ENCODE measurements at regions of chr4 and their contacts with region 1.

Region 1: GRCh38 chr4:121950212-121950679 is 1.6 kb downstream of the TRPC3 start:
- DNase-seq: peak; percentile 63
- ATAC-seq: peak; percentile 83
- H3K4me3 Mint-ChIP-seq: peak overlapping the region; percentile 81
- H3K27ac Mint-ChIP-seq: no peak overlapping the region
- H3K4me1 Mint-ChIP-seq: peaks cover 14% of the 10 kb centered on the region
- H3K27me3 Mint-ChIP-seq: peaks cover 44% of the 10 kb centered on the region
- CTCF ChIP-seq: no peak

Region 2: GRCh38 chr4:120517966-120518365 is 1432.3 kb before region 1 on chr4:
- CTCF ChIA-PET with region 1: no interaction called
- POLR2A ChIA-PET with region 1: no interaction called
- intact Hi-C with region 1: no loop called
- DNase-seq: no peak
- ATAC-seq: no peak
- H3K4me3 Mint-ChIP-seq: no peak overlapping the region
- H3K27ac Mint-ChIP-seq: no peak overlapping the region
- H3K4me1 Mint-ChIP-seq: no peaks in the 10 kb centered on the region
- H3K27me3 Mint-ChIP-seq: no peaks in the 10 kb centered on the region
- CTCF ChIP-seq: no peak

Region 3: DNA sequence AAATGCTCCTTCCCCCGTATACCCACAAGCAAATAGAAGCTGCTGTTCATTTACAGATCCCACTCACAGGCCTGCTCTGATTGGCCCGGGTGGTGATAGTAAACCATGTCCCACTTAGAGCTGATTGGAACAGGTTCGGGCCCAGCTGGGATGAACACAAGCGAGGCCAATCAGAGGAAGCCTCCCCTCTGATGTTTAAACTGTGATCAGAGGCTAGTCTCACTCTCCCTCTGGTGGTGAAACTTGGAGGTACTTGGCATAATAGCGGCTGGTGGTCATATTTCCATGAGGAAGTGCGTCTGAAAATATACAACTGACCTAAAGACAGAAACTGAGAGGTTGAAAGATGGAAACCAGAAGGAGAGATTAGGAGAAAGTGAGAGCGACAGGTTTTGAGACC is 53.1 kb after region 1 on chr4:
- CTCF ChIA-PET with region 1: interaction called, 7 read pairs
- POLR2A ChIA-PET with region 1: no interaction called
- intact Hi-C with region 1: loop called (anchors 1 kb)
- DNase-seq: no peak
- ATAC-seq: peak; percentile 75
- H3K4me3 Mint-ChIP-seq: no peak overlapping the region
- H3K27ac Mint-ChIP-seq: no peak overlapping the region
- H3K4me1 Mint-ChIP-seq: no peaks in the 10 kb centered on the region
- H3K27me3 Mint-ChIP-seq: peaks cover 12% of the 10 kb centered on the region
- CTCF ChIP-seq: no peak

Region 4: GRCh38 chr4:122151982-122152710 is 201.9 kb after region 1 on chr4 and contains the start of gene BLTP1:
- CTCF ChIA-PET with region 1: no interaction called
- POLR2A ChIA-PET with region 1: no interaction called
- intact Hi-C with region 1: loop called (anchors 5 kb)
- DNase-seq: peak; percentile 85
- ATAC-seq: peak; percentile 95
- H3K4me3 Mint-ChIP-seq: peak within 1 kb of the TSS; percentile 97
- H3K27ac Mint-ChIP-seq: peak within 1 kb of the TSS; percentile 97
- H3K4me1 Mint-ChIP-seq: peaks cover 39% of the 10 kb centered on the region
- H3K27me3 Mint-ChIP-seq: no peaks in the 10 kb centered on the region
- CTCF ChIP-seq: no peak
- total RNA-seq, gene BLTP1: 39.1 and 44.4 TPM in 2 replicates

Region 5: DNA sequence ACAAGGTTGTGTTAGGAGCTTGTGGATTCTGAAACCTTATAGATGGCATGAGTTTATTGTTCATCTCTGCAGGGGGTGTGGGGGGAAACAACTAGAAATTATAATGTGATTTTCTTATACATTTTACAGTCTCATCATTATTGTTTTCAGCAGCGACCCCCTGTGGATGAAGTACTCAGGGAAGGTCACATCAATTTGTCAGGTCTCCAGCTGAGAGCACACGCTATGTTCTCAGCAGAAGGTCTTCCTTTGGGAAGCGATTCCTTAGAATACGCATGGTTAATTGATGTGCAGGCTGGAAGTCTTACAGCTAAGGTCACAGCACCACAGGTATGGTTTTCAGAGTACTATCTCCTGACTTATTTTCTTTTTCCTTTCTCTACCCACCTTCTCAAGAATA is 274.1 kb after region 1 on chr4:
- CTCF ChIA-PET with region 1: no interaction called
- POLR2A ChIA-PET with region 1: no interaction called
- intact Hi-C with region 1: loop called (anchors 2 kb)
- DNase-seq: no peak
- ATAC-seq: no peak
- H3K4me3 Mint-ChIP-seq: no peak overlapping the region
- H3K27ac Mint-ChIP-seq: no peak overlapping the region
- H3K4me1 Mint-ChIP-seq: no peaks in the 10 kb centered on the region
- H3K27me3 Mint-ChIP-seq: no peaks in the 10 kb centered on the region
- CTCF ChIP-seq: no peak

Region 6: GRCh38 chr4:122577808-122578781 is 627.8 kb after region 1 on chr4:
- CTCF ChIA-PET with region 1: no interaction called
- POLR2A ChIA-PET with region 1: no interaction called
- intact Hi-C with region 1: loop called (anchors 2 kb)
- DNase-seq: no peak
- ATAC-seq: peak; percentile 54
- H3K4me3 Mint-ChIP-seq: no peak overlapping the region
- H3K27ac Mint-ChIP-seq: no peak overlapping the region
- H3K4me1 Mint-ChIP-seq: no peaks in the 10 kb centered on the region
- H3K27me3 Mint-ChIP-seq: peaks cover 7% of the 10 kb centered on the region
- CTCF ChIP-seq: peak; percentile 68

Measured in activated B cell treated with CpG ODN at 0.5 μM for 24 hours (primary cell).